ENCODE measurements at regions of chr3 and their contacts with region 1.

Region 1: DNA sequence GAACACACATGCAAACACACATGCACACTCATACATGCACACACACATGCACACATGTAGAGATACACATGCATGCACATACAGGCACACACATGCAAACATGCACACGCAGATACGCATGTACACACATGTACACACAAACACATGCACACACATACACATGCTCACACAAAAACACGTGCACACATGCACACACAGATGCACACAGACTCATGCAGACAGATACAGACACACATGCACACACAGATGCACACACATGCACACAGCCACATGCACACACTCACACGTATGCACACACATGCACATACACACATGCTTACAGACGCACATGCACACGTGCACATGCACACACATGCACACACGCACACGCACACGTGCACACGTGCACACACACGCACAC is 37.3 kb upstream of the ALG1L2 start:
- H3K4me3 Mint-ChIP-seq: no peak overlapping the region
- H3K27ac Mint-ChIP-seq: no peak overlapping the region
- H3K4me1 Mint-ChIP-seq: peaks cover 5% of the 10 kb centered on the region
- H3K27me3 Mint-ChIP-seq: no peaks in the 10 kb centered on the region

Region 2: GRCh38 chr3:129794311-129795185 is 249.8 kb before region 1 on chr3:
- intact Hi-C with region 1: no loop called
- H3K4me3 Mint-ChIP-seq: peak overlapping the region; percentile 53
- H3K27ac Mint-ChIP-seq: peak overlapping the region; percentile 40
- H3K4me1 Mint-ChIP-seq: peaks cover 27% of the 10 kb centered on the region
- H3K27me3 Mint-ChIP-seq: no peaks in the 10 kb centered on the region

Region 3: GRCh38 chr3:129984125-129984524 is 60.2 kb before region 1 on chr3:
- intact Hi-C with region 1: no loop called
- H3K4me3 Mint-ChIP-seq: no peak overlapping the region
- H3K27ac Mint-ChIP-seq: no peak overlapping the region
- H3K4me1 Mint-ChIP-seq: no peaks in the 10 kb centered on the region
- H3K27me3 Mint-ChIP-seq: no peaks in the 10 kb centered on the region

Region 4: GRCh38 chr3:130088061-130088460 is 43.7 kb after region 1 on chr3:
- intact Hi-C with region 1: loop called (anchors 1 kb)
- H3K4me3 Mint-ChIP-seq: no peak overlapping the region
- H3K27ac Mint-ChIP-seq: no peak overlapping the region
- H3K4me1 Mint-ChIP-seq: peaks cover 24% of the 10 kb centered on the region
- H3K27me3 Mint-ChIP-seq: no peaks in the 10 kb centered on the region

Region 5: GRCh38 chr3:130671545-130672312 is 627.4 kb after region 1 on chr3:
- intact Hi-C with region 1: no loop called
- H3K4me3 Mint-ChIP-seq: no peak overlapping the region
- H3K27ac Mint-ChIP-seq: no peak overlapping the region
- H3K4me1 Mint-ChIP-seq: no peaks in the 10 kb centered on the region
- H3K27me3 Mint-ChIP-seq: no peaks in the 10 kb centered on the region